BJ (cell line): ENCODE measurements at regions of chr12 and their contacts with region 1.

Region 1: DNA sequence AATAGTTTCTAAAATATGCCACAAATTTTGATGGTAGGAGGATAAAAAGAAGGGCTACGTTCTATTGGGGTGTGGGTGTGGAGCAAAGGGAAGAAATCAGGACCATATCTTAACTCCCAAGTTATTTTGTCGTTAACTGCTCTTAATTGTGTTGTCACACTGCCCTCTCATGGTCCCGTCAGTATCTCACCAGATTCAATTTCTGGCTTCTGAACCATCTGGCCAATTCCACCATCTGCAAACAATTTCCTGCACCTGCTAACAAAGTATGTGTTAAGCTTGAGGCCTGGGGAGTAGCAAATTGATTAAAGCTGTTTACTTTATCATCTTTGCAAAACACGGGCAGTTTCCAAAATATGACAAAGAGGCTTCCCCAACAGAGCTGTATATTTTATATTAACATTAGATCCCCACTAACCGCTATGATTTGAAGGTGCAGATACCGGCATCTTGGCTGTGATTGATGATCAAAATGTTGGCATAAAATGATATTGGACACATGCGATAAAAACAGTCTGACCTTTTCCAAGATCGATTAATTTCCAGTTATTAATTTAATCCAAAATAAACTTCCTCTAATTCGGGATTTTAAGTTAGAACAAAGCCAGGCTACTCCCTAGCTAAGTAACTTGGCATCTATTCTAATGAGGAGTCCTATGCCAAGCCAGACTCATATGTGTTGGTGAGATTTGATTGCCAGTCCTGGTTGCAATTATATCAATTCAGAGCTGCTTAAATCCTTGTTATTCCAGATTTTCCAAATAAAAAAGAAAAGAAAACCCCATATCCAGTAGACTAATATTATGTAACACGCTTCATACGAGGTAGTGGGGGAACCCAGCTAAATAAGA is 6.9 kb upstream of the DNM1L start:
- DNase-seq: peak; percentile 74
- H3K4me3 ChIP-seq: no peak overlapping the region
- H3K27me3 ChIP-seq: no peaks in the 10 kb centered on the region
- CTCF ChIP-seq: peak; percentile 59

Region 2: GRCh38 chr12:32163596-32163995 is 508.6 kb before region 1 on chr12:
- CTCF ChIA-PET with region 1: no interaction called
- POLR2A ChIA-PET with region 1: no interaction called
- DNase-seq: no peak
- H3K4me3 ChIP-seq: no peak overlapping the region
- H3K27me3 ChIP-seq: no peaks in the 10 kb centered on the region
- CTCF ChIP-seq: no peak

Region 3: DNA sequence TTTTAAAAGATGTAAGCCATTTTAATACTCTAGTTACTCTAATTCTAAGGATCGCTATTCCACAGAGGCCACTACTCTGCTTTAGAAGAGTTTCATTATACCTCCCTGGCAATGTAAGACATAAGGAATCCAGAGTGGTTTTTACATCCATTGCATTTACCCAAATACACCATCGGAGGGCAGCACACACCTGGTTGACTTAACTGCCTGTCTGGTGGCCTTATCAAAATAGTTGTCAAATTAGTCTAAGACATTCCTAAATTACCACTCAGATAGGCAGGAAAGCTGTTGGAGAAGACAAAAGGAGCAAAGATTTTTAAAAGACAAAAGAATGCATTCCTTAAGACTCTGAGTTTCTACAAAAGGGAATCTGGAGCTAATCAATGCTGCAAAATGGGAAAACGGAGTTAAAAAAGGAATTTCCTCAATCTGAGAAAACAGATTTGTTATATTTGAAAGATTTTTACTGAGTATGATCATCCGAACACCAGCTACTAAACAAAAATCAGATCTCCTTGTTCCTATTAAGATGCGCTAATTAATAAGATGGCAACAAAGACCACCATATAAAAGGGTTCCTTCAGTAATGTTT is 306.6 kb before region 1 on chr12:
- CTCF ChIA-PET with region 1: interaction called, 42 read pairs
- POLR2A ChIA-PET with region 1: no interaction called
- DNase-seq: peak; percentile 30
- H3K4me3 ChIP-seq: no peak overlapping the region
- H3K27me3 ChIP-seq: no peaks in the 10 kb centered on the region
- CTCF ChIP-seq: peak; percentile 76

Region 4: GRCh38 chr12:32455607-32456071 is 216.5 kb before region 1 on chr12:
- CTCF ChIA-PET with region 1: interaction called, 33 read pairs
- POLR2A ChIA-PET with region 1: no interaction called
- DNase-seq: peak; percentile 45
- H3K4me3 ChIP-seq: peak overlapping the region; percentile 18; the same call in 1 of the 2 replicates
- H3K27me3 ChIP-seq: no peaks in the 10 kb centered on the region
- CTCF ChIP-seq: peak; percentile 58

Region 5: DNA sequence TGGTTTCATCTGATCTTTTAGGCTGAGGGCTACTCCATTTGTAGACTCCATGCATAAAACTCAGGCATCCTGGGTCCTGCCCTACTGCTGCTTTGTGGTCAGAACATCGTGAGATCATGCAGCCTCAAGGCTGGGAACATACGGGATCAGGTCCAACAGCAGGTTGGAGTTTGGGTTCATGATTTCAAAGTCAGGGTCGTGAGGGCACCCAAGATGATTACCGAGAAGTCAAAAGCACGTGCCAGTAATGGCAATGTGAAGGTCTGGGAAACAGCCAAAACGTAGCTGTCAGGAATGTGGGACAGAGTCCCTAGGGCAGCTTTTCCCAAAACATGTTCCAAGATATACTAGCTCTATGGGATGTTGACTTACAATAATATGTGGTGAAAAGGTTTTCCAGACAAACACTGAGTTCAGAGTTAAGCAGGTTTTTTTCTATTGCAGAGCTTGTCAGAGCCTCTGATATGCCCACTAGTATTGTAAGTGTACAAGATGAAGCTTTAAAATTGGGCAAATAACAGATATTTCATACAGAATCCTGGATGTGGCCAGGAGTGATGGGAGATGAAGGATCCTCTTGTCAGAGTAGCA is 123.4 kb before region 1 on chr12:
- CTCF ChIA-PET with region 1: no interaction called
- POLR2A ChIA-PET with region 1: no interaction called
- DNase-seq: peak; percentile 96
- H3K4me3 ChIP-seq: no peak overlapping the region
- H3K27me3 ChIP-seq: no peaks in the 10 kb centered on the region
- CTCF ChIP-seq: no peak

Region 6: GRCh38 chr12:32688786-32689185 is 16.6 kb after region 1 on chr12:
- CTCF ChIA-PET with region 1: no interaction called
- POLR2A ChIA-PET with region 1: no interaction called
- DNase-seq: no peak
- H3K4me3 ChIP-seq: no peak overlapping the region
- H3K27me3 ChIP-seq: no peaks in the 10 kb centered on the region
- CTCF ChIP-seq: no peak

Region 7: DNA sequence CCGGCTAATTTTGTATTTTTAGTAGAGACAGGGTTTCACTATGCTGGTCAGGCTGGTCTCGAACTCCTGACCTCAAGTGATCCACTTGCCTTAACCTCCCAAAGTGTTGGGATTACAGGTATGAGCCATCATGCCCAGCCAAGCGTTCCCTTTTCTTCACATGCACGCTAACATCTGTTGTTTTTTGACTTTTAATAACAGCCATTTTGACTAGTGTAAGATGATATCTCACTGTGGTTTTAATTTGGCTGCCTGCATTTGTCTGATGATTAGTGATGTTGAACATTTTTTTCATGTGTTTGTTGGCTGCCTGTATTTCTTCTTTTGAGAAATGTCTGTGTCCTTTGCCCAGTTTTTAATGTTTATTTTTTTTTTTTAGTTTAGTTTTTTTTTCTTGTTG is 93.8 kb after region 1 on chr12:
- CTCF ChIA-PET with region 1: no interaction called
- POLR2A ChIA-PET with region 1: no interaction called
- DNase-seq: no peak
- H3K4me3 ChIP-seq: no peak overlapping the region
- H3K27me3 ChIP-seq: peaks cover 2% of the 10 kb centered on the region
- CTCF ChIP-seq: no peak